Natural killer cell (primary cell): ENCODE measurements at regions of chr20 and their contacts with region 1.

Region 1: GRCh38 chr20:38221119-38221589 is 39.4 kb downstream of the KIAA1755 start:
- DNase-seq: peak; percentile 66 to 77
- ATAC-seq: peak; percentile 73 to 86 (median 83)
- H3K4me3 ChIP-seq: no peak overlapping the region
- H3K4me3 Mint-ChIP-seq: no peak overlapping the region
- H3K27ac ChIP-seq: no peak overlapping the region
- H3K27ac Mint-ChIP-seq: no peak overlapping the region
- H3K4me1 ChIP-seq: peaks cover 6% of the 10 kb centered on the region
- H3K4me1 Mint-ChIP-seq: peaks cover 19 to 23% of the 10 kb centered on the region in 2 donors
- H3K27me3 ChIP-seq: no peaks in the 10 kb centered on the region
- H3K27me3 Mint-ChIP-seq: no peaks in the 10 kb centered on the region
- CTCF ChIP-seq: peak; percentile 88

Region 2: DNA sequence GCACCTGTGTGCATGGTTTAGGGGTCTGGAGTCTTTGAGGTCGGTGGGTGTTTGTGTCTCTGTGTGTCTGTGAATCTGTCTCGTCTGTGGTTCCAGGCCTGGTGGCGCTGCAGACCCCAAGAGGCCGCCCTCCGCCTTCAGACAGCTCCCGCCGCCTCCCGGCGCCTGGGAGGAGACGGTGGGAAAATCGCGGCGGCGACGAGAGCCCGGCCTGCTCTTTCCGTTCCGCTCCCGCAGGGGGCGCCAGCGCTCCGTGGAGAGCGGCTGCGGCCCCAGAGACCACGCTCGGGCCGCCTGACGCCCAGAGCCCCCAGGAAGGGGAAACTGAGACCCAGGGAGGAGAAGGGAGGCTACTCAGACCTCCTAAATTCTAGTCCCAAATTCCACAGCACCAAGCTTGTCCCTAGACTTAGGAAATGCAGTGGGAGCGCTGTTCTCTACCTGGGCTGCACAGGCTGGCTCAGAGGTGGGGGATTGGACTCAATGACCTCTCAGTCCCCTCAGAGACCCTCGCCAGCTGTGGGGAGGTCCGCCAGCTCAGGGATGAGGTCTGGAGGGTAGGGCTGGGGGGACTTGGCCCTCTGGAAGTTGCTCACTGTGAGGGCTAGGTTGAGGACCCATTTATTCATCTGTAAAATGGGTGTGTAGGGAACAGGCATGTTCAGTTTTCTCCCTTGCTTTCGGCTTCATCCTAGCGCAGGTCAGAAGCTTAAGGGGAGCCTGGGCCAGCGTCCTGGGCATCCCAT is 656.6 kb before region 1 on chr20:
- intact Hi-C with region 1: loop called (anchors 2 kb)
- DNase-seq: peak; percentile 35 to 58
- ATAC-seq: peak; percentile 63 to 72 (median 71)
- H3K4me3 ChIP-seq: no peak overlapping the region
- H3K4me3 Mint-ChIP-seq: no peak overlapping the region
- H3K27ac ChIP-seq: no peak overlapping the region
- H3K27ac Mint-ChIP-seq: no peak overlapping the region
- H3K4me1 ChIP-seq: peaks cover 6% of the 10 kb centered on the region
- H3K4me1 Mint-ChIP-seq: no peaks in the 10 kb centered on the region
- H3K27me3 ChIP-seq: peaks cover 21% of the 10 kb centered on the region
- H3K27me3 Mint-ChIP-seq: peaks cover 21 to 47% of the 10 kb centered on the region in 2 donors
- CTCF ChIP-seq: peak; percentile 87

Region 3: GRCh38 chr20:38057351-38057972 is 163.7 kb before region 1 on chr20:
- intact Hi-C with region 1: loop called (anchors 1 kb)
- DNase-seq: peak; percentile 80 to 87
- ATAC-seq: peak; percentile 88 to 94 (median 89)
- H3K4me3 ChIP-seq: no peak overlapping the region
- H3K4me3 Mint-ChIP-seq: no peak overlapping the region
- H3K27ac ChIP-seq: no peak overlapping the region
- H3K27ac Mint-ChIP-seq: peak overlapping the region; percentile 34 to 63
- H3K4me1 ChIP-seq: no peaks in the 10 kb centered on the region
- H3K4me1 Mint-ChIP-seq: peaks cover 15 to 17% of the 10 kb centered on the region in 2 donors
- H3K27me3 ChIP-seq: no peaks in the 10 kb centered on the region
- H3K27me3 Mint-ChIP-seq: no peaks in the 10 kb centered on the region
- CTCF ChIP-seq: peak; percentile 96

Region 4: GRCh38 chr20:38073307-38074071 is 147.7 kb before region 1 on chr20:
- intact Hi-C with region 1: loop called (anchors 5 kb)
- DNase-seq: peak in 1 of 2 donors; percentile 64
- ATAC-seq: peak; percentile 76 to 83 (median 81)
- H3K4me3 ChIP-seq: no peak overlapping the region
- H3K4me3 Mint-ChIP-seq: no peak overlapping the region
- H3K27ac ChIP-seq: no peak overlapping the region
- H3K27ac Mint-ChIP-seq: peak overlapping the region; percentile 35 to 44
- H3K4me1 ChIP-seq: peaks cover 3% of the 10 kb centered on the region
- H3K4me1 Mint-ChIP-seq: peaks cover 21 to 25% of the 10 kb centered on the region in 2 donors
- H3K27me3 ChIP-seq: no peaks in the 10 kb centered on the region
- H3K27me3 Mint-ChIP-seq: no peaks in the 10 kb centered on the region
- CTCF ChIP-seq: peak; percentile 74